ENCODE measurements at regions of chr6 and their contacts with region 1.

Region 1: DNA sequence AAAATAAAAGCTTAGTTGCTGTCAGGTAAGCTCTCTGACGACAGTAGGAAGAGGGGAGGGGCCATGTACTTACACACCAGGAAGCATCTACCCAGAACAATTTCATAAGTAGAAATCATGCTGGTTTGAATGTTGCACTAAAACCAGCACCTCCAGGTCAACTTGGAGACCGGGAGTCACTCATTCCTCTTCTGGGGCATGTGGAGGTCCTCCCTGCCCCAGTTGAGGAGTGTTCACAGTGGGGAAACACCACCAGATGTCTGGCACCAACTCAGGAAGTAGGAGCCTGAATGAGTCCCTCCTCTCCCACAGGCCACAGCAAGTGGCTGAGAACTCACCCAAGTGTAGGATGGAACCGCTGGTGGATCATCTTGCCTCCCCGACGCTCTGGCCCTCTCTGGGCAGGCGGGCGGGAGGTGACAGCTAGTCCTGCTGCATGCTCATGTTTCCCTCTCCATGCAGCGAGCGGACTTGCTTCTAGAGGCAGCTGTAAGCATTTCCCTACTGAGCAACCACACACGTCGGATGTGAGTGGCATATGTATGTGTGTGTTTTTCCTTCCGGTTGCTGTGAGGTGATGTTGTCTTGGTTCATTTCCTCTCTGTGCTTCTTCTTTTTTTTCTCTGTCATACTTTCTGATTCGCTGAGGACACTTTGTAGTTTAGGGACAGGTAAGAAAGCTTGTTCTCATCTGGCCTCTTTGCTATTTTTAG is 149.5 kb upstream of the NEDD9 start:
- DNase-seq: peak; percentile 91
- ATAC-seq: peak; percentile 92
- H3K4me3 ChIP-seq: peak overlapping the region; percentile 62 to 93 (median 80)
- H3K4me3 Mint-ChIP-seq: peak overlapping the region; percentile 95
- H3K27ac ChIP-seq: peak overlapping the region; percentile 81 to 85
- H3K27ac Mint-ChIP-seq: peak overlapping the region; percentile 88
- H3K4me1 ChIP-seq: peaks cover 64 to 74% of the 10 kb centered on the region in 2 donors
- H3K4me1 Mint-ChIP-seq: peaks cover 83% of the 10 kb centered on the region
- H3K27me3 ChIP-seq: no peaks in the 10 kb centered on the region
- H3K27me3 Mint-ChIP-seq: no peaks in the 10 kb centered on the region
- CTCF ChIP-seq: no peak

Region 2: GRCh38 chr6:10687582-10687981 is 694.4 kb before region 1 on chr6:
- CTCF ChIA-PET with region 1: no interaction called
- POLR2A ChIA-PET with region 1: no interaction called
- intact Hi-C with region 1: no loop called
- DNase-seq: no peak
- ATAC-seq: no peak
- H3K4me3 ChIP-seq: no peak overlapping the region
- H3K4me3 Mint-ChIP-seq: no peak overlapping the region
- H3K27ac ChIP-seq: no peak overlapping the region
- H3K27ac Mint-ChIP-seq: no peak overlapping the region
- H3K4me1 ChIP-seq: no peaks in the 10 kb centered on the region
- H3K4me1 Mint-ChIP-seq: no peaks in the 10 kb centered on the region
- H3K27me3 ChIP-seq: peaks cover 0 to 9% (median 0%) of the 10 kb centered on the region in 4 experiments
- H3K27me3 Mint-ChIP-seq: peaks cover 17% of the 10 kb centered on the region
- CTCF ChIP-seq: no peak

Region 3: GRCh38 chr6:11404838-11405237 is 22.9 kb after region 1 on chr6:
- CTCF ChIA-PET with region 1: interaction called, 3 read pairs
- POLR2A ChIA-PET with region 1: no interaction called
- intact Hi-C with region 1: loop called (anchors 2 kb)
- DNase-seq: peak; percentile 43
- ATAC-seq: peak; percentile 44
- H3K4me3 ChIP-seq: peak overlapping the region in 1 of 5 experiments; percentile 36
- H3K4me3 Mint-ChIP-seq: peak overlapping the region; percentile 42
- H3K27ac ChIP-seq: peak overlapping the region; percentile 59 to 62
- H3K27ac Mint-ChIP-seq: peak overlapping the region; percentile 79
- H3K4me1 ChIP-seq: peaks cover 36% of the 10 kb centered on the region in 2 donors
- H3K4me1 Mint-ChIP-seq: peaks cover 42% of the 10 kb centered on the region
- H3K27me3 ChIP-seq: no peaks in the 10 kb centered on the region
- H3K27me3 Mint-ChIP-seq: no peaks in the 10 kb centered on the region
- CTCF ChIP-seq: no peak

Region 4: DNA sequence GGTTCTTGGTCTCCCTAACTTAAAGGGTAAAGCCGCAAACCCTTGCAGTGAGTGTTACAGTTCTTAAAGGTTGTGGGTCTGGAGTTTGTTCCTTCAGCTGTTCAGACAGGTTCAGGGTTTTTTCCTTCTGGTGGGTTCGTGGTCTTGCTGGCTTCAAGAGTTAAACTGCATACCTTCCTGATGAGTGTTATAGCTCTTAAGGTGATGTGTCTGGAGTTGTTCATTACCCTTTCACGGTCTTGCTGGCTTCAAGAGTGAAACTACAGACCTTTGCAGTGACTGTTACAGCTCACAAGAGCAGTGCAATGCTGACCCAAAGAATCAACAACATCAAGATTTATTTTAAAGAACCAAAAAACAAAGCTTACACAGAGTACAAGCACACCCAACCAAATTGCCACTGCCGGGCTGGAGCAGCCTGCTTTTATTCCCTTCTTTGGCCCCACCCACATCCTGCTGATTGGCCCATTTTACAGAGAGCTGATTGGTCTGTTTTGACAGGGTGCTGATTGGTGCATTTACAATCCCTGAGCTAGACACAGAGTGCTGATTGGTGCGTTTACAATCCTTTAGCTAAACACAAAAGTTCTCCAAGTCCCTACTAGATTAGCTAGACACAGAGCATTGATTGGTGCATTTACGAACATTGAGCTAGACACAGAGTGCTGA is 34.3 kb after region 1 on chr6:
- CTCF ChIA-PET with region 1: no interaction called
- POLR2A ChIA-PET with region 1: no interaction called
- intact Hi-C with region 1: no loop called
- DNase-seq: no peak
- ATAC-seq: no peak
- H3K4me3 ChIP-seq: no peak overlapping the region
- H3K4me3 Mint-ChIP-seq: no peak overlapping the region
- H3K27ac ChIP-seq: no peak overlapping the region
- H3K27ac Mint-ChIP-seq: no peak overlapping the region
- H3K4me1 ChIP-seq: peaks cover 14 to 25% of the 10 kb centered on the region in 2 donors
- H3K4me1 Mint-ChIP-seq: peaks cover 26% of the 10 kb centered on the region
- H3K27me3 ChIP-seq: no peaks in the 10 kb centered on the region
- H3K27me3 Mint-ChIP-seq: no peaks in the 10 kb centered on the region
- CTCF ChIP-seq: no peak

Measured in B cell (primary cell).